HepG2 (cell line): ENCODE measurements at regions of chr3 and their contacts with region 1.

Region 1: DNA sequence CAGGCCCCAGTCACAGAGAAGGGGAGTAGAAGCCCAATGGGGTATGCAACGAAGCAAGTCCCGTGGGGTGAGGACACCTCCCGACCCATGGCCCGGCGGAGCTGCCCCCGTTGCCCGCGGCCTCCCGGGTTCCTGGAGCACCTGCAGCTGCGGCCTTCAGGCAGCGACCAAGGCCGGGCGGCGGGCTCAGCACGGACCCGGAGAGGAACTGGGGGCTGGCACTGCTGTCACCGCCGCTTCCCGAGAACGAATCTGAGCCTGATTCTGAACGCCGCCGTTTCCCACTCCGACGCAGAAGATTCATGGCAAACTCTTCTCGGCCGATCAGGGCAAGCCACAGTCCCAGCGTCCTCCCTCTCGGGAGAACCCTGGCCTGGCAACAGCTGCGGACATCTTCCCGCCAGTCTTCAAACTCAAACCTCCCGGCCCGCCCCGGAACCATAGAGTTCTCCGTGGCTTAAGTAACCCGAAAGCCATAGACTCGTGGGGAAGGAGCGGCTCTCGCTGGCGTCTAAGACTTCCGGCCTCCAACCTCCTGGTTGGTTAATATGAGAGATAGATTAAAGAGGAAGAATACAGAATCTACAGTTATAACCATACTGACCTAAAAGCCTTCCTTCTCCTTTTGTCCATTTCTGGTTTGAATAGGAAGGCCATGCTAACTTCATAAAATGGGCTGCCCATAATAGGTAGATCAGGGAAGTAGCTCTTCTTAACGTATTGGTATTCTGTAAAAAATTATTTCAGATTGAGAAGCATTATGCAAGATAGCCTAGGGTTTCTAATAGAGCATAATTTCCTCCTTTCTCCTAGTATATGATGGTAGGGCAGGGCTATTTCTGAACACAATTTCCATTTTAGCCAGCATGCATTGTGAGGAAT is at the start of gene POLQ:
- DNase-seq: peak; percentile 87
- ATAC-seq: peak; percentile 97
- H3K4me3 ChIP-seq: peak within 1 kb of the TSS; percentile 81 to 96 (median 82)
- H3K27ac ChIP-seq: peak within 1 kb of the TSS; percentile 51
- H3K4me1 ChIP-seq: peaks cover 9% of the 10 kb centered on the region
- H3K27me3 ChIP-seq: no peaks in the 10 kb centered on the region; a peak in 1 of 5 replicates
- CTCF ChIP-seq: no peak
- EP300 ChIP-seq: peak in 1 of 2 experiments; percentile 21; a peak in 1 of 4 replicates
- POLR2A ChIP-seq: peak; percentile 49 to 63; a peak in 2 of 4 replicates
- RAD21 ChIP-seq: no peak
- total RNA-seq, gene POLQ: 16.0 and 18.6 TPM in 2 replicates

Region 2: GRCh38 chr3:121443456-121443855 is 102.4 kb before region 1 on chr3:
- CTCF ChIA-PET with region 1: no interaction called
- POLR2A ChIA-PET with region 1: no interaction called
- in situ Hi-C with region 1: no loop called
- intact Hi-C with region 1: no loop called
- DNase-seq: no peak
- ATAC-seq: no peak
- H3K4me3 ChIP-seq: no peak overlapping the region
- H3K27ac ChIP-seq: no peak overlapping the region
- H3K4me1 ChIP-seq: no peaks in the 10 kb centered on the region
- H3K27me3 ChIP-seq: no peaks in the 10 kb centered on the region; a peak in 1 of 5 replicates
- CTCF ChIP-seq: no peak
- EP300 ChIP-seq: no peak
- POLR2A ChIP-seq: no peak
- RAD21 ChIP-seq: no peak

Region 3: DNA sequence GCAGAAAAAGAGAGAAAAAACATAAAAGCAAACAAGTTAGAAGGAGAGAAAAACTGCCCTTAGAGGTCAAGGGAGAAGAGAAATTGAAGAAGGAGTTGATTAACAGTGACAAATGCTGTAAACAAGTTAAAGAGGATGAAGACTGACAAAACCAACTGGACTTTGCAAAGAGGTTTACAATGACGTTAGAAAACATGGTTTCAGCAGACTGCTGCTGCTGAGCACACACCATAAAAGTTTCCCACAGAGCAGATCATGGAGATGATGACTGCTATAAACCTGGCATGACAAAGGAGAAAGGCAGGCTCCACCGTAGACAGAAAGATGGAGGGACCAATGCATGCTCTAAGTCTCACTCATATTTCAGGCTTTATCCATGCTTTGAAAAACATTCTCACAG is 78.7 kb before region 1 on chr3:
- CTCF ChIA-PET with region 1: no interaction called
- POLR2A ChIA-PET with region 1: no interaction called
- in situ Hi-C with region 1: no loop called
- intact Hi-C with region 1: no loop called
- DNase-seq: no peak
- ATAC-seq: no peak
- H3K4me3 ChIP-seq: no peak overlapping the region
- H3K27ac ChIP-seq: no peak overlapping the region
- H3K4me1 ChIP-seq: no peaks in the 10 kb centered on the region
- H3K27me3 ChIP-seq: no peaks in the 10 kb centered on the region
- CTCF ChIP-seq: no peak
- EP300 ChIP-seq: no peak
- POLR2A ChIP-seq: no peak
- RAD21 ChIP-seq: no peak

Region 4: GRCh38 chr3:121995161-121996137 is 449.6 kb after region 1 on chr3:
- CTCF ChIA-PET with region 1: interaction called, 9 read pairs
- POLR2A ChIA-PET with region 1: no interaction called
- in situ Hi-C with region 1: loop called (anchors 10 kb)
- intact Hi-C with region 1: loop called (anchors 1 kb)
- DNase-seq: peak; percentile 52
- ATAC-seq: peak; percentile 99
- H3K4me3 ChIP-seq: no peak overlapping the region
- H3K27ac ChIP-seq: no peak overlapping the region
- H3K4me1 ChIP-seq: no peaks in the 10 kb centered on the region
- H3K27me3 ChIP-seq: no peaks in the 10 kb centered on the region
- CTCF ChIP-seq: peak; percentile 80
- EP300 ChIP-seq: no peak
- POLR2A ChIP-seq: no peak
- RAD21 ChIP-seq: peak; percentile 66

Region 5: DNA sequence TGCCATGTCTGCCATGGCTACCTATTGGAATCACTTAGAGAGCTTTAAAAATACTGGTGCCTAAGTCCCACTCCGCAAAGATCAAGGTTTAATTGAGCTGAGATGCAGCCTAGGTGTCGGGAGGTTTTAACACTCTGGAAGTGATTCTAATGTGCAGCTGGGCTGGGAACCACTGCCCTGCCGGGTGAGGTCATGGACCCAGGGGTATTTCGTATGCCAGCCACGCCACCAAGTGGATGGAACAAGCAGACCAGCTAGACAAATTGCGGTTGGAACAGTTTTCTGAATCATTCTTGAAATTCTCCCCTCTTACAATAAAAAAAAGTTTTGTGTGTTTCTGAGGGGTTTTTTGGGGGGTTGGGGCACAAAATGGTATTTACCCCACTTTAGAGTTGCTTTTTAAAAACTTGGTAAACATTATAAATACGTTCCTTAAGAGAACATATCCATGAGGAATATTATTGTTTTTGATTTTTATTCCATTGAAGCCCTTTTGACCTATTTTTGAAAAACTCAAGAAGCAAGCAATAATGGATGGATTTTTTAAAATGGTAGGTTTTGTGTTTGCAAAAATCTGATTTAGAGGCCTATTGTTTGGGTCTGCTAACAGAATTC is 713.0 kb after region 1 on chr3:
- CTCF ChIA-PET with region 1: interaction called, 7 read pairs
- POLR2A ChIA-PET with region 1: no interaction called
- in situ Hi-C with region 1: loop called (anchors 5 kb)
- intact Hi-C with region 1: loop called (anchors 1 kb)
- DNase-seq: peak; percentile 48
- ATAC-seq: peak; percentile 95
- H3K4me3 ChIP-seq: no peak overlapping the region
- H3K27ac ChIP-seq: no peak overlapping the region
- H3K4me1 ChIP-seq: no peaks in the 10 kb centered on the region
- H3K27me3 ChIP-seq: peaks cover 0 to 15% of the 10 kb centered on the region in 2 experiments; a peak in 3 of 5 replicates
- CTCF ChIP-seq: peak; percentile 86
- EP300 ChIP-seq: no peak
- POLR2A ChIP-seq: no peak
- RAD21 ChIP-seq: peak; percentile 66

Region 6: DNA sequence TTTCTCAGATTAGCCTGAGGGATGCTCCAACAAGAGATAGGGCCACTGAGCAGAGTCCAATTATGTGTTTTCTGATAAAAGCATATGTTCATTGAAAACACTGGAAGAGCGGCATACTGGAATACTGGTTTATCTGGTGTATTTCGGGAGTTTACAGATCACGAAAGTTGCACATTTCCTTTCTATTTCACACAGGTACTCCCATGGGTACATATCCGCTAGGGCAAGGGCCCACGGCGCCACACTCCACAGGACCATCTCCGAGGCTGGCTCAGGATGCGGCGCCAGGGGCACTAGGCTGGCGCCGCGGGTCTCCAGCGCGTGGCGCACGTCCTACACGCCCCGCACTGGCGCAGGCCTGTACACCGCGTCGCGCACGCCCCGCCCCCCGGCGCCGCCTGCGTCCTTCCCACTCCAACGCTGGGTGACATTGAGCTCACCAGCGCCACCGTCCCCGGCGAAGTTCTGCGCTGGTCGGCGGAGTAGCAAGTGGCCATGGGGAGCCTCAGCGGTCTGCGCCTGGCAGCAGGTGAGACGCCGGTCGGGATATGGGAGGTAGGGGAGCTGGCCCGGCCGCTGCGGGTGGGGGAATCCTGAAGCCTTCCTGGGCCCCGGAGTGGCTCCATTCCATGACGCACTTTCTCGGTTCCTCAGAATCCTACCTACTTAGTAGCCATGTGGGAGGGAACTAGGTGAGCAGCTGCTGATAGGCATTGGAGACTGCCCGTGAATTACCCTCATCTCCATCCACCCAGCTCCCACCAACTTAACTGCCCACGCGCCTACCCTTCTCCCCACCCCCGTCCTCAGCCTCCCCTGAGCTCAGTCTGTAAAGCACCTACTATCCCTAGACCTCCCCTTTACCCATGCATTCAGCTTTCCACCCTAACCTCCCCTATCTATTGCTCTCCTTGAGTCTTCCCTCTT is 838.2 kb after region 1 on chr3 and contains the start of gene FAM162A:
- CTCF ChIA-PET with region 1: no interaction called
- POLR2A ChIA-PET with region 1: no interaction called
- in situ Hi-C with region 1: no loop called
- intact Hi-C with region 1: loop called (anchors 10 kb)
- DNase-seq: peak; percentile 90
- ATAC-seq: peak; percentile 97
- H3K4me3 ChIP-seq: peak within 1 kb of the TSS; percentile 83 to 96 (median 84)
- H3K27ac ChIP-seq: peak within 1 kb of the TSS; percentile 88
- H3K4me1 ChIP-seq: peaks cover 73% of the 10 kb centered on the region
- H3K27me3 ChIP-seq: no peaks in the 10 kb centered on the region; a peak in 1 of 5 replicates
- CTCF ChIP-seq: peak; percentile 96
- EP300 ChIP-seq: 0 out of 4 replicates have a peak, but pooled peaks of 1 of the 2 experiments have one; percentile 20
- POLR2A ChIP-seq: peak; percentile 87 to 95
- RAD21 ChIP-seq: peak; percentile 84
- total RNA-seq, gene FAM162A: 115 and 131 TPM in 2 replicates

Region 7: DNA sequence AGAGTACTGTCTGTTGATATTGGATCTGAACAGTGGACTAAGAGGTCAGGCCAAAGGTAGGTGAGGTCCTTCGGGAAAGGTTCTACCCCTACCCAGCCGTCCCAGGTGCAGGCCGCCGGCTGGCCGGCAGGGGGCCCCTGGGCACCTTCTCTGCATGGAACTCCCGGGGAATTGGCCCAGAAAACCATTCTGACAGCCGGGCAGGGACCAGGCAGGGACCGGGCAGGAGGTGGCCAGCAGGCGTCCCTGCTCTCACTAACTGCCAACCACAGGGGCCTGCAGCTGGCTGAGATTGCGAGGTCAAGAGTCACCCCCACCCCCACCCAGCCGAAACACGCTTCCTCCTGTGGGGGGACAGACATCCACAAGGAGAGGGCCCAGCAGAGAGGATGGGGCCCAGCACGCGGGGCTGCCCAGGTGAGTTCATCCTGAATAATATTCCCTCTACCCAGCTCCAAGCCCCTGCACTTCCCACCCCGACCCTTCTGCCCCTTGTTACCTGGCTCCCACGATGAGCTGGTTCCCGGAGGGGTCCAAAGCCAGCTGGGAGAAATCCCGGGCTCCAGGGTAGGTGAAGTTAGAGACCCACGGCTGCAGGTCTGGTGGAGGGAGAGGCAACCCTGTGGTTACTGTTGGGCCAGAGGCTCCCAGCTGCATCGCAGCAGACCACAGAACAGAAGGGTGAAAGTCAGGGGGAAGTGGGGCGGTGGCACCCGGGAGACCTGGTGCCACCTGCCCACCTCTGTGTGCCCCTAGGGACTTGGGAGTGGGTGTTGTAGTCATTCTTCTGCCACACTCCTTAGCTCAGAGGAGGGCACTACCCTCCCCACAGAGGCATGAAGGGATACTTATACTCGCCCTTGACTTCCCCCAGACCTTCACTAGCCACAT is 1397.4 kb after region 1 on chr3:
- CTCF ChIA-PET with region 1: no interaction called
- POLR2A ChIA-PET with region 1: no interaction called
- in situ Hi-C with region 1: no loop called
- intact Hi-C with region 1: loop called (anchors 5 kb)
- DNase-seq: peak; percentile 61
- ATAC-seq: peak; percentile 98
- H3K4me3 ChIP-seq: no peak overlapping the region
- H3K27ac ChIP-seq: no peak overlapping the region
- H3K4me1 ChIP-seq: peaks cover 18% of the 10 kb centered on the region
- H3K27me3 ChIP-seq: peaks cover 0 to 25% of the 10 kb centered on the region in 2 experiments; a peak in 3 of 5 replicates
- CTCF ChIP-seq: peak; percentile 90
- EP300 ChIP-seq: no peak
- POLR2A ChIP-seq: no peak
- RAD21 ChIP-seq: peak; percentile 94

Region 8: DNA sequence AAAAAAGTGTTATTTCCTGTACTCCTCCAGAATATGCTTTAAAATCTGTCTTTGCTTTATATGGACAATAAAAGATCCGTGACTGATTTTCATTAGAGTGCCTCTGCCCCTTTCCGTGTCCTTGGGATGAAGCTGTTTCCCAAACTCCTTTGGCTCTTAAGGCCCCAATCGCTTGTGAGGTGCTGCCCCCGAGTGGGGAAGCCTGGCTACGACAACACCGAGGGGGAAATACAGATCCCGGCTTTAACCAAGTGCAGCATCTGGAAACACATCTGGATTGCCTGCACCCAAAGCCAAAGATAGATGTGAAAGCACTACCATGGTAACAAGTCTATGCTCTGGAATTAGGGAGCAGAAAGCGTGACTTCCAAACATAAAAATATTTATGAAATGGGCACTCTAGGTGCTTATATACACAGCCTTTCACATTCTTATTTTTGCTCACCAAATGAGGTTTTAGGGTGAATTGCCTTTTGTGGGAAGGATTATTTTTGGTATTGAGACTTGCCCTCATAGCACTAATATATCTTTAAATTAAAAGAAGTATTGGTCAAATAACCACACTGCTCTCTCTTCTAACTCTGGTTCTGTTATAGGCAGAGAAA is 1943.7 kb after region 1 on chr3:
- CTCF ChIA-PET with region 1: no interaction called
- POLR2A ChIA-PET with region 1: no interaction called
- in situ Hi-C with region 1: no loop called
- intact Hi-C with region 1: loop called (anchors 5 kb)
- DNase-seq: peak; percentile 27
- ATAC-seq: peak; percentile 71
- H3K4me3 ChIP-seq: no peak overlapping the region
- H3K27ac ChIP-seq: no peak overlapping the region
- H3K4me1 ChIP-seq: peaks cover 13% of the 10 kb centered on the region
- H3K27me3 ChIP-seq: no peaks in the 10 kb centered on the region
- CTCF ChIP-seq: peak; percentile 91
- EP300 ChIP-seq: no peak
- POLR2A ChIP-seq: no peak
- RAD21 ChIP-seq: peak; percentile 87